Mammary epithelial cell (primary cell): ENCODE measurements at regions of chr12 and their contacts with region 1.

Region 1: DNA sequence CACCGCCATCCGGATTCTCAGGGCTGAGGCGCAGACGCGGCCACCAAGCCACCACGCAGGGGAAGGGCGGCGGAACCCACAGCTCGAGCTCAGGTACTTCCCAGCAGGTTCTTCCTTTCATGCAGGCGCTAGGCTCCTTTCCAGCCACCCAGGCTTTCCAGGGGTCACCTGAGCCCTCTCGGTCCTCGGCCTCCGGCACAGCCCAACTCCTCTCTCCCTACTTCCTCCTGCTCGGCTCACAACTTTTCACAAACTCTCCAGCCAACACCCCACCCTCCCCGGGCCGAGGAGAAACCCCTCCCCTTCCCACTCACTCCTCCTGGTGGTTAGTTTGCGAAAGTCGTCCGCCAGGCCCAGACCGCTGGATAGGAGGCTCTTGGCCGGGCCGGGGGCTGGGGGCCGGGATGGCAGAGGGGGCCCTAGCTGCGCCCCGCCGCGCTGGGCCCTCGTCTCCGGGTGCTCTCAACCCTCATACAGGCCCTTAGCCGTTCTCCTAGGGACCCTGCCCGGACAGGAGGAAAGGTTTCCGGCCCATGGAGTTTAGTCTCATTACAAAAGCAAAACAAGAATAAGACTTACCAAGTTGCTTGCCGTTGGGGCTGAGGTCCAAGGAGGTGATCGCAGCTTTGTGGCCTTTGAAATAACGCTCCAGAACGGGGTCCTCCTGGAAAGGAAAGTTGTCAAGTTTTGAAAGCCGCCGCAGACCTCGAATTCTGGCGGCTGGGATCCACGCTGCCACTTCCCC is at the start of gene GALNT4:
- DNase-seq: peak; percentile 83
- H3K4me3 ChIP-seq: peak within 1 kb of the TSS; percentile 88 to 97 (median 92)
- H3K27ac ChIP-seq: peak within 1 kb of the TSS; percentile 54
- H3K4me1 ChIP-seq: peaks cover 14% of the 10 kb centered on the region
- H3K27me3 ChIP-seq: no peaks in the 10 kb centered on the region
- CTCF ChIP-seq: peak; percentile 41 to 86
- total RNA-seq, gene GALNT4: 7.9 to 12.3 TPM

Region 2: DNA sequence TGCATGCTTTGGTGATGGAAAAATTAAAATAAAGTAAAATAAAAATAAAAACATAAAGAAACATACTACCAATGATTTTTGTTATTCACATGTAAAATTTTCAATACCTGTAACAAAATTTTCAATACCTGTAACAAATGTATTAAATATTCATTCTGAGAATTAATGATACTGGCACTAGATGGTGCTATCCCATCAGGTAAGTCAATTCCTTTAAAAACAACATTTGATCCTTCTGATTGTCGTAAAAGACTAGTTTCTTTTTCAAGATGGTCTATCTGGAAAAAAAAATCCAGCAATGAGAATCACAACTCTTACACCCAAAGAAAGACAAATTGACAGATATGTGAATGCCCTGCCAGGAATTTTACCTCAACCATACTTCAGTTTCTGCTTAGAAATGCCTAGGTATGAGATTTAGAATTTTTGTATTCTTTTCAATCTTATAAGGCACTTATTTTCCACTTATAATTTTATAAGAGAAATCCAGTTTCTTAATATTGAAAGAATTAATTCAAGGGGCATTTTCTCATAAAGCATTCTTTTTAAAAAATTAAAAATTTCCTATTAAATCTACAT is 1413.5 kb before region 1 on chr12:
- CTCF ChIA-PET with region 1: no interaction called
- dilution Hi-C with region 1: no loop called
- in situ Hi-C with region 1: no loop called
- intact Hi-C with region 1: loop called (anchors 5 kb)
- DNase-seq: peak; percentile 48
- H3K4me3 ChIP-seq: peak overlapping the region in 2 of 3 experiments; percentile 36 to 44
- H3K27ac ChIP-seq: peak overlapping the region; percentile 57
- H3K4me1 ChIP-seq: peaks cover 4% of the 10 kb centered on the region
- H3K27me3 ChIP-seq: no peaks in the 10 kb centered on the region
- CTCF ChIP-seq: peak; percentile 49 to 51

Region 3: GRCh38 chr12:89019408-89020120 is 505.1 kb before region 1 on chr12:
- CTCF ChIA-PET with region 1: interaction called, 8 read pairs
- dilution Hi-C with region 1: no loop called
- in situ Hi-C with region 1: loop called (anchors 5 kb)
- intact Hi-C with region 1: loop called (anchors 1 kb)
- DNase-seq: peak; percentile 81
- H3K4me3 ChIP-seq: peak overlapping the region; percentile 18 to 49 (median 36)
- H3K27ac ChIP-seq: peak overlapping the region; percentile 57
- H3K4me1 ChIP-seq: peaks cover 16% of the 10 kb centered on the region
- H3K27me3 ChIP-seq: no peaks in the 10 kb centered on the region
- CTCF ChIP-seq: peak; percentile 92 to 93

Region 4: GRCh38 chr12:89162704-89163261 is 361.9 kb before region 1 on chr12:
- CTCF ChIA-PET with region 1: no interaction called
- dilution Hi-C with region 1: no loop called
- in situ Hi-C with region 1: no loop called
- intact Hi-C with region 1: loop called (anchors 10 kb)
- DNase-seq: peak; percentile 100
- H3K4me3 ChIP-seq: no peak overlapping the region
- H3K27ac ChIP-seq: peak overlapping the region; percentile 77
- H3K4me1 ChIP-seq: peaks cover 44% of the 10 kb centered on the region
- H3K27me3 ChIP-seq: no peaks in the 10 kb centered on the region
- CTCF ChIP-seq: no peak

Region 5: DNA sequence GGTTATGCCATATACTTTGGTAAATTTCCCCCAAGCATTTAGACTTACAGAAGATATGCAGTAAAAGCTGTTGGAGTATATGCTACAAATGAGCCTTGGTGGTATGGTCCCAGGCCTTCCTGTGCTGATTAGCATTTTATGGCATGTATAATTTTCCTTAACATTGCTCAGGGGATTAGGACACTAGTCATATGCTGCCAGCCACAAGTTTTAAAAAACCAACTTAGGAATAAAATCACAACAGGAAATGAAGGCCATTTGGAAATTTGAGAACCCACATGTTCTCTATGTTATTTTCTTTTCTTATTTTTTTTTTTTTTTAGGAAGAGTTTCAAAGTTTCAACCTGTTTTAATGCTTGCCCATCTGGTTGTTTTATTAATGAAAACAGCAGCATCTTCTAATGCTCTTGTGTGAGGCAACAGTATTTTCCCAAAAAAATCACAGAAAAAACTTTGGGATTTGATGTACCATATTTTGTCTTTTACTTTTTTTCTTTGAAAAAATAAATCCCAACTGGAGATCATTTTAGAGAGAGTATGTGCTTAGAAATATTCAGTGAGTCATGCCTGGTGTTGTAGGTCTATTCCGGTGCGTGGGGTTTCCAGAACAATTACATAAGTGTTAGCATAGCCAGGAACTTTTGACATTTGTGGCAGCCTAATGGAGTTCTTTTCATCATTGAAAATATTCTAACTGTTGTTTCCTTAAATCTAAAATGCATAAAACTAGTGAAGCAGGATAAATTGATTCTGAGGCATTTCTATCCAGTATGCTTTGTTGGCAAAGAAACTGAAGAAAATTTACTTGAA is 150.7 kb before region 1 on chr12:
- CTCF ChIA-PET with region 1: no interaction called
- dilution Hi-C with region 1: no loop called
- in situ Hi-C with region 1: no loop called
- intact Hi-C with region 1: loop called (anchors 5 kb)
- DNase-seq: peak; percentile 81
- H3K4me3 ChIP-seq: no peak overlapping the region
- H3K27ac ChIP-seq: peak overlapping the region; percentile 95
- H3K4me1 ChIP-seq: peaks cover 80% of the 10 kb centered on the region
- H3K27me3 ChIP-seq: no peaks in the 10 kb centered on the region
- CTCF ChIP-seq: no peak

Region 6: GRCh38 chr12:89648211-89648930 is 123.7 kb after region 1 on chr12:
- CTCF ChIA-PET with region 1: no interaction called
- dilution Hi-C with region 1: no loop called
- in situ Hi-C with region 1: no loop called
- intact Hi-C with region 1: no loop called
- DNase-seq: no peak
- H3K4me3 ChIP-seq: no peak overlapping the region
- H3K27ac ChIP-seq: no peak overlapping the region
- H3K4me1 ChIP-seq: no peaks in the 10 kb centered on the region
- H3K27me3 ChIP-seq: no peaks in the 10 kb centered on the region
- CTCF ChIP-seq: no peak

Region 7: GRCh38 chr12:90909069-90909770 is 1384.5 kb after region 1 on chr12:
- CTCF ChIA-PET with region 1: no interaction called
- dilution Hi-C with region 1: no loop called
- in situ Hi-C with region 1: loop called in 1 of 2 experiments (anchors 25 kb)
- intact Hi-C with region 1: no loop called
- DNase-seq: peak; percentile 46
- H3K4me3 ChIP-seq: no peak overlapping the region
- H3K27ac ChIP-seq: no peak overlapping the region
- H3K4me1 ChIP-seq: peaks cover 24% of the 10 kb centered on the region
- H3K27me3 ChIP-seq: no peaks in the 10 kb centered on the region
- CTCF ChIP-seq: peak; percentile 84 to 95